ENCODE measurements at regions of chr7 and their contacts with region 1.

Region 1: DNA sequence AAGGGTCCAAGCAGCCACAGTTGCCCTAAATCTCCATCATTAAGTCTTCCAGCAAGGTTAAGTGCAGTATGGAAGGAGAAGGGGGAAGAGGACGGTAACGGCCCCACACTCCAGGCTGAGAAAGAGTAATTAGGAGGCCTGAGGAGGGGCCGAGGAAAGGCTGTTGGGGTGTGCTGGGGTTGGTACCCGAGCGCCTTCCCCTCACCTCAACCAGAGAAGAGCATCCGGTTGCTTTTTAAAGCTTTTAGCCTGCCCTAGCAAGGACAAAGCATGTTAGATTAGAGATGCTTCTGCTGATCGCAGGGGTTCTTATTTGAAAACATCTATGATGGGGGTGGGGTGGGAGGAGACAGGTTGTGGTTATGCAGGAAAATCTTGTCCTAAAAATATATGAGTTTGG is 9.0 kb upstream of the ZSCAN21 start:
- DNase-seq: no peak
- ATAC-seq: no peak
- H3K4me3 ChIP-seq: no peak overlapping the region
- H3K27ac ChIP-seq: no peak overlapping the region
- H3K4me1 ChIP-seq: peaks cover 5% of the 10 kb centered on the region; the same call in 1 of the 2 replicates
- H3K27me3 ChIP-seq: no peaks in the 10 kb centered on the region
- CTCF ChIP-seq: no peak

Region 2: DNA sequence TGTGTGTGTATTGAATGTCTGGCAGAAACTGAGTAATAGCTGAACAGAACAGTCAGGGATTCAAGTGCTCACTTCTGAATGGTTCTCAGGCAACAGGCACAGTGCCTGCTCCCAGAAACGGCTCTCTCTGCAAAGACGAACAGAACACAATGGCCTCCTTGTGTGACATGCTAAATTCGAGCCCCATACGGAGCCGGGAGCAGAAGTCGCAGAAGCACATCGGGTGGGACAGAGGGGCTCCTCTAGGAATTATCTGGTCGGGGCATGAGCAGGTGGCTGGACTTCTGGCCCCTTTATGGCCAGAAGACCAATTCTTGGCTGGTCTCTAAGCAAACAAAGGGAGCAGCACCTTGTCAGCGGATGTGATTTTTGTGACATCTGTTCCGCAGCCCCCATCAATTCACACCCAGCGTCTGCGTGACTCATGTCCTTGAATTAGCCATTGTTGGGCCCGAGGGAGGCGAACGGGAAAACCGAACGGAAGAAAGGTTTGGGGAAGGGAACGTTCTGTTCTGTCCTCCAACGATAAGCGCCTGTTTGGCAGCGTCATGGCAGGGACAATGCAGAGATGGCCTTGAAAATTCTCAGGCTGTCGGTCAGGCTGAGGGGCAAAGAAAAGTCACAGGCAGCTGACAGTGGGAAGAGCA is 1470.8 kb before region 1 on chr7:
- CTCF ChIA-PET with region 1: no interaction called
- POLR2A ChIA-PET with region 1: interaction called, 14 read pairs
- in situ Hi-C with region 1: no loop called
- intact Hi-C with region 1: no loop called
- DNase-seq: no peak
- ATAC-seq: peak; percentile 81
- H3K4me3 ChIP-seq: peak overlapping the region in 1 of 2 experiments; percentile 33; a peak in 2 of 4 replicates
- H3K27ac ChIP-seq: no peak overlapping the region
- H3K4me1 ChIP-seq: no peaks in the 10 kb centered on the region
- H3K27me3 ChIP-seq: no peaks in the 10 kb centered on the region
- CTCF ChIP-seq: no peak

Measured in Panc1 (cell line).